Transverse colon (tissue), 4 donors: ENCODE measurements at regions of chr12 and their contacts with region 1.

Region 1: DNA sequence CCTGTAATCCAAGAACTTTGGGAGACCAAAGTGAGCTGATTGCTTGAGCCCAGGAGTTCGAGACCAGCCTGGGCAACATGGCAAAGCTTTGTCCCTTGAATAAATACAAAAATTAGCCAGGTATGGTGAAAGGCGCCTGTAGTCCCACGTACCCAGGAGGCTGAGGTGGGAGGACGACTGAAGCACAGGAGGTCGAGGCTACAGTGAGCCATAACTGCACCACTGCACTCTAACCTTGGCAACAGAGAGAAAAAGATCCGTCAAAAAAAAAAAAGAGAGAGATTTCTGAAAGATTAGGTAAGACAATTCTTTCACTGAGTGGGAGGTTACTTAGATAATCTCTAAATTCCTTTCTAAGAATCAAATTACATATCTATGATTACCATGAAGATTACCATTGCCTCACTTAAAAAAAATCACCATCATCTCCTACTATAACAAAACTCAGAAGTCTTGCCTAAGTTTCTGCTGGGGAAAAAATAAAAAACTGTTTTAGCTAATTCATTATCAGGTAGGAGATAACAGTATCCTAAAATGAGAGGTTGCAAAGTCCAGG is 366.7 kb downstream of the DUSP6 start:
- DNase-seq: no peak
- H3K4me3 ChIP-seq: no peak overlapping the region
- H3K27ac ChIP-seq: no peak overlapping the region
- H3K4me1 ChIP-seq: no peaks in the 10 kb centered on the region
- H3K27me3 ChIP-seq: no peaks in the 10 kb centered on the region
- CTCF ChIP-seq: no peak
- EP300 ChIP-seq: no peak
- POLR2A ChIP-seq: no peak

Region 2: GRCh38 chr12:88111074-88111652 is 874.4 kb before region 1 on chr12:
- in situ Hi-C with region 1: loop called in 2 of 4 experiments (anchors 10 to 25 kb)
- intact Hi-C with region 1: loop called (anchors 10 kb)
- DNase-seq: no peak
- H3K4me3 ChIP-seq: peak overlapping the region in 2 of 4 donors; percentile 13 to 28
- H3K27ac ChIP-seq: no peak overlapping the region
- H3K4me1 ChIP-seq: peaks cover 0 to 6% (median 2%) of the 10 kb centered on the region in 4 donors
- H3K27me3 ChIP-seq: no peaks in the 10 kb centered on the region
- CTCF ChIP-seq: peak; percentile 39 to 62 (median 46)
- EP300 ChIP-seq: no peak
- POLR2A ChIP-seq: no peak

Region 3: DNA sequence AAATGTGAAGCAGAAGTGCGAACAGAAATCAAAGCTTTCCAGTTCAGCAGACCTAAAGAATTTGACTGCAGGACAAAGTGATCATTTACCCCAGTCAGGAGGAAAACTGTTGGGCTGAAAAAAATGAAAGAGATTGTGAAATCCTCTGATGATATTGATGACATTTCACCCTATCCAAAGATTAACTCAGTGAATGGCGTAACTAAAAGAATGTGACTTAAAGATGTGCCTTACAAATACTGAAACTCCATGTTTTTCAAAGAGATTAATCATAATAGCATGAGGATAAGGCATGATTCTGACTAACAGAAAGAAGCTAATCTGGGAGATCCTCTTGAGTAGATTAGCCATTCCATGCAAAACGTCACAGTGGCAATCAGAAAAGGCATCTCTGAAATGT is 141.2 kb after region 1 on chr12:
- in situ Hi-C with region 1: no loop called
- intact Hi-C with region 1: no loop called
- DNase-seq: no peak
- H3K4me3 ChIP-seq: no peak overlapping the region
- H3K27ac ChIP-seq: no peak overlapping the region
- H3K4me1 ChIP-seq: no peaks in the 10 kb centered on the region
- H3K27me3 ChIP-seq: no peaks in the 10 kb centered on the region
- CTCF ChIP-seq: no peak
- EP300 ChIP-seq: no peak
- POLR2A ChIP-seq: no peak

Region 4: DNA sequence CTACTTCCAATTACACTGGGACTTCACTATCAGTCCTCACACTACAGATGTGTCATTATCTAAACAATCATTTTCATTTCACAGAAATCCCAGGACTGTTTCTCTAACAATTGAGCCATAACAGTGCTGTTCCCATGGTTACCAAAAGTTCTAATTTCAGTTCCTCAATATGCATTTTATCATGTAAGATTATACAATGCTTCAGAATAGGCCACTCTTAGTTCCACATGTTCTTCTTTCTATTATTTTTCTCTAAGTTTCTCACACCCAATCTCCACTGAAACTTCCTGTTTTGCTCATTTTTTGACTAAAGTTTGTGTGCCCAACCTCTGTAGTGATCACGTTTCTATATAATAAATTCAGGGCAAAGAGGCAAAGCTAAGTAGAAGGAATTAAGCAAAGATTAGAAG is 181.0 kb after region 1 on chr12:
- in situ Hi-C with region 1: no loop called
- intact Hi-C with region 1: no loop called
- DNase-seq: no peak
- H3K4me3 ChIP-seq: no peak overlapping the region
- H3K27ac ChIP-seq: peak overlapping the region in 3 of 4 donors; percentile 1 to 58 (median 48)
- H3K4me1 ChIP-seq: peaks cover 0 to 35% (median 13%) of the 10 kb centered on the region in 4 donors
- H3K27me3 ChIP-seq: no peaks in the 10 kb centered on the region
- CTCF ChIP-seq: no peak
- EP300 ChIP-seq: no peak
- POLR2A ChIP-seq: peak; percentile 10